PC-3 (cell line): ENCODE measurements at regions of chr12 and their contacts with region 1.

Region 1: DNA sequence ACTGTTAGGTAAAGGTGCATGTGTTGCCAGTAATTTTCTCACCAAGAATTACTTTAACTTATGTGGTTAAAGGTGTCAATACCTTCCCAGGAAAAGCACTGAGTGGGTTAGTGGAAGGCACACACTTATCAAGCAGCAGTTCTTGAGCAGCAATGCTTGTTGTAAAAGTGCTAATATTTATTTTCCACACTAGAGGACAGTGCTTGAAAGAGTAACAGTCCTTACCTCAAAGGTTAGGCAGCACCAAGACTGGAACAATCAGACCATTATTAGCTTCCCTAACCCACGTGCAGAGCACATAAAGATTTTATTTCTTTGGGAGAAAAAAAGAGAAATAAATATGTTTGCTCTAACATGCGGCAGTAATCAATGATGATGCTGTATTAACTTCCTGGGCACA is 48.8 kb upstream of the KRR1 start:
- DNase-seq: peak; percentile 63
- ATAC-seq: peak; percentile 94
- H3K4me3 ChIP-seq: no peak overlapping the region
- H3K27ac ChIP-seq: no peak overlapping the region
- H3K4me1 ChIP-seq: peaks cover 12% of the 10 kb centered on the region
- H3K27me3 ChIP-seq: no peaks in the 10 kb centered on the region
- CTCF ChIP-seq: peak; percentile 66

Region 2: DNA sequence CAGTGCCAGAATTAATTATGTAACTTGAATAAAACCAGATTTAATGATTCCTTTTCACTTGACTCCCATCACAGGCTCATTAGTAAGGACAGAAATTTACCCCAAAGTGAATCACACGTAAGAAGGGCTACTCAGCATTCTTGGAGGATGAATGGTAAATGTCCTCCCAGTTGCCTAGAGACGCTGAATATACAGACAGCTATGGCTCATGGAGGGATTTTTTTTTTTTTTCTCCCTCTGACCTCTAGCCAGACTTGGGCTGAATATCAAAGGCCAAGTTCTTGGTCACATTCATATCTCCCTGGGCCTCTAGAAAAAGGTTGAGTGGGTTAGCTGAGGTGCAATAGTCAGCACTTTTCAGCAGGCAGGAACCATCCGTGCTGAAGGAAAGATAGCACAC is 393.9 kb after region 1 on chr12:
- CTCF ChIA-PET with region 1: no interaction called
- POLR2A ChIA-PET with region 1: no interaction called
- intact Hi-C with region 1: loop called (anchors 1 kb)
- DNase-seq: peak; percentile 96
- ATAC-seq: peak; percentile 77
- H3K4me3 ChIP-seq: no peak overlapping the region
- H3K27ac ChIP-seq: peak overlapping the region; percentile 89
- H3K4me1 ChIP-seq: peaks cover 49% of the 10 kb centered on the region
- H3K27me3 ChIP-seq: no peaks in the 10 kb centered on the region
- CTCF ChIP-seq: no peak

Region 3: GRCh38 chr12:76310110-76310509 is 749.9 kb after region 1 on chr12:
- CTCF ChIA-PET with region 1: no interaction called
- POLR2A ChIA-PET with region 1: interaction called, 14 read pairs
- intact Hi-C with region 1: no loop called
- DNase-seq: peak; percentile 86
- ATAC-seq: peak; percentile 100
- H3K4me3 ChIP-seq: no peak overlapping the region
- H3K27ac ChIP-seq: no peak overlapping the region
- H3K4me1 ChIP-seq: peaks cover 8% of the 10 kb centered on the region
- H3K27me3 ChIP-seq: no peaks in the 10 kb centered on the region
- CTCF ChIP-seq: no peak